ENCODE measurements at regions of chr22 and their contacts with region 1.

Region 1: DNA sequence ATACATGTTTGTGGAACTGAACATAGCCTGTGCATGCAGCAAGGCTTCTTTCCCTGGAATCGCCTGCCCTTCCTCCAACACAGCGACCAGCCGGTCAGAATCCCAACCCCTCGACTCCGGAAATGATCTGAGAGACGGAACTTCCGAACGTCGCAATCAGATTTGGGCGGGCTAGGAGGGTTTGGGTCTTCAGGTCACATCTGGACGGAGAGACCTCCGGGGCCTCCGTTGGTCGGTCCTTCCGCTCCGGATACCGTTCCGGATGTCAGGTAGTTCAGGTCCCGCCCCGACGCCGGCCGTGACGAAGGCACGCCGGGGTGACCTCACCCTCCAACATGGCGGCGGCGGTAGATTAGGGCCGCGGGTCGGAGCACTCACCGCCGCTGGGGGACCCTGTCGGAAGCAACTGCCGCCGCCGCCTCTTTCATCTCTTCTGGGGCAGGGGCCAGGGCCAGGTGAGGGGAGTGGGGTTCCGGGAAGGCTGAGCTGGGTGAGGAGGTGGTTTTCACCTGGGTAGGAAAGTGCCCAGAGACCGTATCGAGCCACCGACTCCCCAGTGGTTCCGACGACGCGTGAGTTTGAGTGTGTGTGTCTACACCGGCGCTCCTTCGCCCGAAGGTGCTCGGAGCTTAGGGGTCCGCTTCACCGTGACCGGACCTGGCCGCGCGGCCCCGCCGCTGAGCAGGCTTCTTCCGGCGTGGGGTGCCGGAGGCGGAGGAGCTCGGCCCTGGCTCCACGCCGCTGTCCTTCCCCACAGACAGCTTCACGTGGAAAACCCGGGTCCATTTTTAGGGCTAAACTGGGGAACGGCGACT is at the start of gene BCL2L13:
- DNase-seq: peak; percentile 91 to 95 (median 92)
- H3K4me3 ChIP-seq: peak within 1 kb of the TSS; percentile 92
- H3K27ac ChIP-seq: peak within 1 kb of the TSS; percentile 97 to 99
- H3K4me1 ChIP-seq: peaks cover 8% of the 10 kb centered on the region
- H3K27me3 ChIP-seq: no peaks in the 10 kb centered on the region
- CTCF ChIP-seq: peak in 2 of 3 donors; percentile 39 to 44
- EP300 ChIP-seq: peak; percentile 18
- POLR2A ChIP-seq: peak; percentile 97
- total RNA-seq, gene BCL2L13: 22.9 to 39.5 (median 33.8) TPM

Region 2: DNA sequence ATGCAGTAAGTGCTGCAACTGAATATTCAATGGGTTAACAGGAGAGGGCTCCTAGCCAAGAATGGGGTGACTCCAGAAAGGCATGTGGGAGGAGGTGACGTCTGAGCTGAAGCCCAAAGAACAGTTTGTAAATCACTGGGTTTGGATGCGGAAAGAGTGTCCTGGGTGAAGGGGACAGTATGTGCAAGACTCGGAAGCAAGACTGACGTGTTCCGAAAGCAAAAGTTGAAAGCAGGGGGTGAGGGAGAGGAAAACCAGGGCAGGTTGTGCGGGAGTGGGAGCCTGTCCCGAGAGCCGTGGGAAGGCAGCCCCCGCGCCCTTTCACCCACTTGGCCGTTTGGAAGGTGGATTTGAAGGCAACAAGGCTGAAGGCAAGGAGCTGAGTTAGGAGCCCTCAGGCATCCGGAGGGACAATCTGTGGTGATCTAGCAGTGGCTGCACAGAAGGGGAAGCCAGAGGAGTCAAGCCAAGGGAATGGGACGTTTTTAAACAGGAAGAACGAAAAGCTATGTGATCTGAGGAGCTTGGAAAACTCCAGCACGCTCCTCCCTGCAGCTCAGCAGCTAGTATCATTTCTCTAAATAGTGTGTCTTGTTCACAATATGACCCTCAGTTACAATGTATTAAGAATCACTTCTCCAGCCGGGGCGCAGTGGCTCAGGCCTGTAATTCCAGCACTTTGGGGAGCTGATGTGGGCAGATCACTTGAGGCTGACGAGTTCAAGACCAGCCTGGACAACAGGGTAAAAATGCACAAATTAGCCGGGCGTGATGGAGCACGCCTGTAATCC is 67.6 kb before region 1 on chr22:
- intact Hi-C with region 1: loop called in 1 of 4 experiments (anchors 10 kb)
- DNase-seq: peak; percentile 54 to 86 (median 78)
- H3K4me3 ChIP-seq: peak overlapping the region; percentile 24
- H3K27ac ChIP-seq: peak overlapping the region; percentile 26 to 30
- H3K4me1 ChIP-seq: peaks cover 8% of the 10 kb centered on the region
- H3K27me3 ChIP-seq: no peaks in the 10 kb centered on the region
- CTCF ChIP-seq: no peak
- EP300 ChIP-seq: peak; percentile 98
- POLR2A ChIP-seq: peak; percentile 20